Panc1 (cell line): ENCODE measurements at regions of chr11 and their contacts with region 1.

Region 1: GRCh38 chr11:124837491-124837856 is 27.8 kb upstream of the ROBO3 start:
- DNase-seq: peak; percentile 62
- ATAC-seq: peak; percentile 82
- H3K4me3 ChIP-seq: no peak overlapping the region
- H3K27ac ChIP-seq: no peak overlapping the region
- H3K4me1 ChIP-seq: no peaks in the 10 kb centered on the region; the same call in 1 of the 2 replicates
- H3K27me3 ChIP-seq: peaks cover 47% of the 10 kb centered on the region
- CTCF ChIP-seq: peak; percentile 82

Region 2: GRCh38 chr11:124470516-124471227 is 366.8 kb before region 1 on chr11:
- CTCF ChIA-PET with region 1: interaction called, 10 read pairs
- POLR2A ChIA-PET with region 1: no interaction called
- in situ Hi-C with region 1: no loop called
- intact Hi-C with region 1: no loop called
- DNase-seq: no peak
- ATAC-seq: no peak
- H3K4me3 ChIP-seq: no peak overlapping the region
- H3K27ac ChIP-seq: no peak overlapping the region
- H3K4me1 ChIP-seq: no peaks in the 10 kb centered on the region
- H3K27me3 ChIP-seq: 0 out of 2 replicates have a peak, but pooled peaks cover 2% of the 10 kb centered on the region
- CTCF ChIP-seq: no peak

Region 3: DNA sequence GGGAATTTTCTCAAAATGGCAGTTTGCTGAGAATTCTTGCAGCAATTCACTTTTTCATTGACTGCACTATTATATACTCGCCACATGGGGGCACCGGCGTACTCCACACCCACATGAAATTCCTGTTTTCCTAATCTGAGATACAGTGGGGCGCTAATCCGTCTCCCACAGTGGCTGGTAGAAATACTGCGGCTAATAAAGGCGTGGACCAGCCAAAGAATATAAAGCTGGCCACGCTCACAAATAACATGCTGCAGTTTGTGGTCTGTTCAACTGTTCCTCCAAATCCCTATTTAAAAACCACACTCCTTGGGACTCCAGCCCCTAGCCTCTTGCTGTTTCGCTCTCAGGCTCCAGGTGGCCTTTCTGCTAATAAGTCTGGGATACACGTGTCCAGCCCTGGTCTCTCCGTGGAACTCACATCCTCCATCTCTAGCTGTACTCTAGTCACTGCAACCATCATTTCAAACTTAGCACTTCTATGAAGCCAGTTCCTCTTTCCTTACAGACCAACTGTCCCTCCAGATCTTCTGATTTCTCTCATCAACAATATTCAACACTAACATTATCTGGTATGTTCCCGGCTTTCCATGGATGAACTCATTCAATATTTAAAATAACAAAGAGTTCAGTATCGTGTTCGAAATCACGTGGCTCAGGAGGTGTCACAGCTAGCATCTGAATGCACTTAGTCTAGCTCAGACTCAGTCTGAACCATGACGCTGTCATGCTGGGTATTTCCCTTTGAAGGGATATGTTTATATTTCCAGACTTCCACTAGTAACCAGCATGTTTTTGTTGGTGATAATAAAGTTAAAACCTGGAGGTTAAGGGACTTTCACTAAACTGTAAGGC is 192.8 kb before region 1 on chr11:
- CTCF ChIA-PET with region 1: interaction called, 18 read pairs
- POLR2A ChIA-PET with region 1: no interaction called
- in situ Hi-C with region 1: no loop called
- intact Hi-C with region 1: loop called (anchors 1 kb)
- DNase-seq: peak; percentile 71
- ATAC-seq: peak; percentile 94
- H3K4me3 ChIP-seq: peak overlapping the region; percentile 6 to 44; a peak in 2 of 4 replicates
- H3K27ac ChIP-seq: no peak overlapping the region
- H3K4me1 ChIP-seq: no peaks in the 10 kb centered on the region
- H3K27me3 ChIP-seq: no peaks in the 10 kb centered on the region
- CTCF ChIP-seq: peak; percentile 98

Region 4: DNA sequence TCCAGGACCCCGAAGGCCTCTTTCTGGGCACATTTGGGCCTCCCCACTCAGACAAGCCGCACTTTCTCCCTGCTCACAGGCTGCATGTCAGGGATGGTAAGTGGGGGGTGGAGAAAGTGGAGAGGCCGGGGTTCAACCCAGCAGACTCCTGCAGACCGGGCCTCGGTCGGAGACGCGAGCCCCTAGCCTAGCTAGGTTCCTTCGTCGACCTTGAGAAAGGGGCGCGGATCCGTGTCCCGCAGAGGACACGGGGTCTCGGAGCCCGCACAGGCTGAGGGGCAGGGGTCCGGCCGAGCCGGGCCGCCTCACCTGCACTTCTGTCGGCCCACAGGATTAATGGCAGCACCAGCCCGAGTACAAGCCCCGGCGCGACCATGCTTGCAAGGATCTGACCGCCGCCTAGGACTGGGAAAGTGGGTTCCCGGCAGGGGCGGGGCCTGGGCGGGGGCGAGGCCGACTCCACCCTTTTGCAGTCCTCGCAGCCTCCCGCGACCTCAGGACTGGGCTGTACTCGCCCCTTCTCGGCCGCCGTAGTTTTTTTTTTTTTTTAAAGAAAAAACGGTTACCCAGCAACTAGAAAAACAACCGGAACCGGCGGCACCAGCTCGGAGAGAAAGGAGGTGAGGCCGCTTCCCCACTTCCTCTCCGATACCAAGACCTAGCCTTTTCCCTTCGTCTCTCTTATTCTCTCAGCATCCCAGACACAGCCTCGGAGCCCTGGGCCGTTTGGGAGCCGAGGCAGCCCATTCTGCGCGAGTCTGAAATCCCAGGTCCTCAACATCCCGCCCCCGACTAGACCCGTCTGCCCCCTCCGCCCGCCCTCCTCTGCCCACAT is 163.9 kb before region 1 on chr11 and contains the starts of genes SIAE and SPA17:
- CTCF ChIA-PET with region 1: interaction called, 16 read pairs
- POLR2A ChIA-PET with region 1: no interaction called
- in situ Hi-C with region 1: loop called (anchors 10 kb)
- intact Hi-C with region 1: loop called (anchors 1 kb)
- DNase-seq: peak; percentile 81
- ATAC-seq: peak; percentile 97
- H3K4me3 ChIP-seq: peak within 1 kb of the TSS; percentile 67 to 75
- H3K27ac ChIP-seq: peak within 1 kb of the TSS; percentile 93
- H3K4me1 ChIP-seq: peaks cover 13% of the 10 kb centered on the region
- H3K27me3 ChIP-seq: no peaks in the 10 kb centered on the region
- CTCF ChIP-seq: no peak
- total RNA-seq, gene SIAE: 14.9 TPM
- total RNA-seq, gene SPA17: 10.1 TPM

Region 5: GRCh38 chr11:124732230-124732629 is 105.2 kb before region 1 on chr11:
- CTCF ChIA-PET with region 1: no interaction called
- POLR2A ChIA-PET with region 1: no interaction called
- in situ Hi-C with region 1: no loop called
- intact Hi-C with region 1: no loop called
- DNase-seq: no peak
- ATAC-seq: no peak
- H3K4me3 ChIP-seq: no peak overlapping the region
- H3K27ac ChIP-seq: no peak overlapping the region
- H3K4me1 ChIP-seq: no peaks in the 10 kb centered on the region
- H3K27me3 ChIP-seq: peaks cover 10% of the 10 kb centered on the region
- CTCF ChIP-seq: no peak

Region 6: GRCh38 chr11:124800226-124800929 is 37.1 kb before region 1 on chr11 and contains the start of gene MSANTD2:
- CTCF ChIA-PET with region 1: interaction called, 3 read pairs
- POLR2A ChIA-PET with region 1: interaction called, 4 read pairs
- in situ Hi-C with region 1: loop called (anchors 5 kb)
- intact Hi-C with region 1: loop called (anchors 5 kb)
- DNase-seq: peak; percentile 17
- ATAC-seq: peak; percentile 98
- H3K4me3 ChIP-seq: peak within 1 kb of the TSS; percentile 75 to 84
- H3K27ac ChIP-seq: peak within 1 kb of the TSS; percentile 96
- H3K4me1 ChIP-seq: peaks cover 23% of the 10 kb centered on the region
- H3K27me3 ChIP-seq: no peaks in the 10 kb centered on the region
- CTCF ChIP-seq: no peak
- total RNA-seq, gene MSANTD2: 20.5 TPM

Region 7: GRCh38 chr11:125022551-125022950 is 185.1 kb after region 1 on chr11:
- CTCF ChIA-PET with region 1: no interaction called
- POLR2A ChIA-PET with region 1: interaction called, 14 read pairs
- in situ Hi-C with region 1: no loop called
- intact Hi-C with region 1: no loop called
- DNase-seq: no peak
- ATAC-seq: no peak
- H3K4me3 ChIP-seq: no peak overlapping the region
- H3K27ac ChIP-seq: no peak overlapping the region
- H3K4me1 ChIP-seq: no peaks in the 10 kb centered on the region
- H3K27me3 ChIP-seq: no peaks in the 10 kb centered on the region
- CTCF ChIP-seq: no peak